AG04450 (cell line): ENCODE measurements at regions of chr1 and their contacts with region 1.

Region 1: GRCh38 chr1:155250633-155251449 is 4.4 kb downstream of the ENTREP3 start:
- DNase-seq: peak; percentile 81
- H3K4me3 ChIP-seq: 0 out of 2 replicates have a peak overlapping the region, but pooled peaks have one; percentile 10
- H3K27ac ChIP-seq: no peak overlapping the region
- H3K27me3 ChIP-seq: no peaks in the 10 kb centered on the region
- CTCF ChIP-seq: peak; percentile 99

Region 2: DNA sequence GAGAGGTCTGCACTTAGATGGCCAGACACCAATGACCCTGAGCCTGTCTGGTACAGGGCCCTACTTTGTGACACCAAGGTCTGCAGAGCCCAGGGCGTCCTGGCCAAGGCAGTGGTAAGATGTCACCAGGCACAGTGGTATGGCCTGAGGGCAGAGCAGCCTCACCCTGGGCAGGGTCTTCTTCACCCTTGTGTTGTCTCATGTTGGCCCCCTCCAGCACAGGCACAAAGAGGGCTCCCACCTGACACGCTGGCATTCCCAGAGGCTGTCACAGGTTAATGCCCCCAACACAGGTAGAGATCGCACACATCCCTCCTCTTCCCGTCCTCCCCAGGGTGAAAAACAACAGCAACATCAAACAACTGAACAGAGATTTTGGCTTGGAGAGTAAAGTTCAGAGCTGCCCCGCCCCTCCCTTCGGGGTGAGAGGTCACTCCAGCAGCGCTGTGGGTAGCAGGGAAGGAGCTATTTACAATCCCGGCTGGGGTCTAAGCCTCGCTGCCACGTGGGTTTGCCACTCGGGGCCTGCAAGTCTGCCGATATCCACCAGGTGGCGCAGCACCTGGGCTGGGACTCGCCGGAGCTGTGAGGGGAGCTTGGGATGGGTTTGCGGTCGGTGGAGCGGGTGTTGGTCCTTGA is 159.7 kb before region 1 on chr1:
- CTCF ChIA-PET with region 1: no interaction called
- POLR2A ChIA-PET with region 1: no interaction called
- DNase-seq: no peak
- H3K4me3 ChIP-seq: no peak overlapping the region
- H3K27ac ChIP-seq: no peak overlapping the region
- H3K27me3 ChIP-seq: peaks cover 17% of the 10 kb centered on the region
- CTCF ChIP-seq: peak; percentile 93

Region 3: GRCh38 chr1:155208541-155209311 is 42.1 kb before region 1 on chr1 and contains the start of gene MTX1:
- CTCF ChIA-PET with region 1: interaction called, 55 read pairs
- POLR2A ChIA-PET with region 1: no interaction called
- DNase-seq: no peak
- H3K4me3 ChIP-seq: peak within 1 kb of the TSS; percentile 96
- H3K27ac ChIP-seq: peak within 1 kb of the TSS; percentile 97
- H3K27me3 ChIP-seq: no peaks in the 10 kb centered on the region
- CTCF ChIP-seq: no peak
- polyA plus RNA-seq, gene MTX1: 44.6 and 62.3 TPM in 2 replicates

Region 4: GRCh38 chr1:155267373-155267772 is 16.5 kb after region 1 on chr1:
- CTCF ChIA-PET with region 1: interaction called, 56 read pairs
- POLR2A ChIA-PET with region 1: interaction called, 18 read pairs
- DNase-seq: no peak
- H3K4me3 ChIP-seq: no peak overlapping the region
- H3K27ac ChIP-seq: no peak overlapping the region
- H3K27me3 ChIP-seq: no peaks in the 10 kb centered on the region
- CTCF ChIP-seq: no peak

Region 5: DNA sequence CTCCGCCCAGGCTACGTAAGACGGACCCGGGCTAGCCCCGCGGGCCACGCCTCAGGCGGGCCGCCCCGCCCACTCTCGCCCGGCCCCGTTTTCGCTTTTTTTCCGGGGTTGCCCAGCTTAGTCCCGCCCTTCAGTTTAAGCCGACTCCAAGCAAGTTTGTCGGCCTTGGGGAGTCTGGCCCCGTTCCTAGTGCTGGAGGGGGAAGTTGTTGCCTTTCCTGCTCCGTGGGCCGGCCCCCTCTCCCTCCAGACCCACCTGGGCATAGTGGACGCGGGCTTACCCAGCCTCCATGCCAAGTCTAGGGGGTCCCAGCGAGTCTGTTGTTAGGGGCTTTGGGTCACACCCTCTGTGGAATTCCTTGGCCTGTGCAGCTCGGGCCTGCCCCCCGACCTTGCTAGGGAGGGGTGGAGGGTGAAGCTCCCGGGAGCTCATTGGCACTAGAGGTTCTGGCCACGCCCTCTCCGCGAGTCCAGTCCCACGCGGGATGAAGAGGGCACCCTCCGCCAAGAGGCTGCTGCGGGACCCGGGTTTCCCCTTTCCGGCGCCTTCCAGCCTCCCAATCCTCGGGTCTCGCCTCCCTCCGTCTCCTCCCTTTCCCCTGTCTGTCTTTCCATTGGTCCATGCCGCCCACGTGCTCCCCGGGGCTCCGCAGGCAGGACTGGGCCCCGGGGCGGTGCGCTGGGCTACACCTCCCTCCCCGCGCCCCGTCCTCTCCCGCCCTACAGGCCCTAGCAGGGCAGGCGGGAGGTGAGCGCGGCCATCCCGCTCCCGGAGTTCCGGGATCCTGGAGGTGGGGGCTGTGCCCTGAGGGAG is 73.2 kb after region 1 on chr1:
- CTCF ChIA-PET with region 1: interaction called, 62 read pairs
- POLR2A ChIA-PET with region 1: no interaction called
- DNase-seq: peak; percentile 89
- H3K4me3 ChIP-seq: peak overlapping the region; percentile 82
- H3K27ac ChIP-seq: peak overlapping the region; percentile 82
- H3K27me3 ChIP-seq: no peaks in the 10 kb centered on the region
- CTCF ChIP-seq: no peak

Region 6: GRCh38 chr1:155596864-155597263 is 346.0 kb after region 1 on chr1:
- CTCF ChIA-PET with region 1: interaction called, 18 read pairs
- POLR2A ChIA-PET with region 1: no interaction called
- DNase-seq: no peak
- H3K4me3 ChIP-seq: no peak overlapping the region
- H3K27ac ChIP-seq: no peak overlapping the region
- H3K27me3 ChIP-seq: no peaks in the 10 kb centered on the region
- CTCF ChIP-seq: no peak